Activated CD4-positive, alpha-beta T cell treated with anti-CD3 and anti-CD28 coated beads for 36 hours (primary cell): ENCODE measurements at regions of chr7 and their contacts with region 1.

Region 1: GRCh38 chr7:84085147-84085546 is 109.4 kb downstream of the SEMA3A start:
- DNase-seq: no peak
- ATAC-seq: no peak
- H3K4me3 Mint-ChIP-seq: no peak overlapping the region
- H3K27ac Mint-ChIP-seq: no peak overlapping the region
- H3K4me1 Mint-ChIP-seq: peaks cover 13% of the 10 kb centered on the region
- H3K27me3 Mint-ChIP-seq: no peaks in the 10 kb centered on the region

Region 2: DNA sequence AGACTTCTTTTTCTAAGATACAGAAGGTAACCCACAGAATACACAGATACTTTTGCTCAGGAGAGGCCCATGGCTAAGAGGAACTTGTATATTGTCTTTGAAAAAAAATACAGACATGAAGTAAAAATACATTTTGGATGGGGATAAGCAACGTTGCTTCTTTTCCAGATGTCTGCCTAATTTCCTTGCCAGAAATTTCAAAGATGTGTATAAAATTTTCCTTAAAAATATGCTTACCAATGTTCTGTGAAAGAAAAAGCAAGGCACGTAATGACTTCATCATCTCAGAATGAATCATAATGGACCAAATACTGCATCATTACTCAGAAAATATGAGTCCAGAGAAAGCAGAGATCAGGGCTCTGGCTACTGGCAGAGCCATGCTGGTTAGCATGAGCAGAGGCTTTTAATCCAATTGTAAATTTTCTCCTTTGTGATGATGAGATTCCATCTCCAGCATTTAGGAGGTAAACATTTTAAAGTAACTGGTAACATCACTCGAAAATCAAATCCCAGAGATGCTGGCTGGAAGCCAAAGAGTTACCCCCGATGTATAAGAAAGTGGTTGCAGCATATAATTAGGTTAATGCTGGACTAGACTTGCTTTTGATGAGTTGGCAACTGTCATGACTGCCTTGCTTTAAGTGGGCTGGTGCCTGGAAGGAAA is 163.1 kb before region 1 on chr7:
- CTCF ChIA-PET with region 1: no interaction called
- POLR2A ChIA-PET with region 1: no interaction called
- intact Hi-C with region 1: no loop called
- DNase-seq: no peak
- ATAC-seq: no peak
- H3K4me3 Mint-ChIP-seq: no peak overlapping the region
- H3K27ac Mint-ChIP-seq: no peak overlapping the region
- H3K4me1 Mint-ChIP-seq: no peaks in the 10 kb centered on the region
- H3K27me3 Mint-ChIP-seq: peaks cover 1% of the 10 kb centered on the region

Region 3: GRCh38 chr7:84039432-84039831 is 45.7 kb before region 1 on chr7:
- CTCF ChIA-PET with region 1: no interaction called
- POLR2A ChIA-PET with region 1: no interaction called
- intact Hi-C with region 1: no loop called
- DNase-seq: no peak
- ATAC-seq: no peak
- H3K4me3 Mint-ChIP-seq: no peak overlapping the region
- H3K27ac Mint-ChIP-seq: no peak overlapping the region
- H3K4me1 Mint-ChIP-seq: no peaks in the 10 kb centered on the region
- H3K27me3 Mint-ChIP-seq: no peaks in the 10 kb centered on the region

Region 4: DNA sequence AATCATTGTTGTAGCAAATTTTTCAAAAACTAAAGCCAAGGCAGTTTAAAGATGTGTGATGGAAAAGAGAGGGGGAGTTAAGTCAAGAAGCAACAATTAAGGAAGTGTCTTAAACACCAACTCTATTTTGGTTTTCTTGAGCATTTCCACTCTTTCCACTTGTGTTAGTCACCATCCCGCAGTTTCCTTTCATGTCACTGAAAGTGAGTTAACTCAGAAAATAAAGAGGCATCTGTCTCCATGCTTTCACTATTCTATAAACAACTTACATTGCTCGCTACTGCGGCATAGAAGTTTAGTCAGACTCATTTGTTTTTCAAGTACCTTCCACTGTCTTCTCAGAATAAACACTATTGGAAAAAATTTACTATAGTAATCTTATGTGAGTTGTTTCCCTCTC is 1386.6 kb after region 1 on chr7:
- CTCF ChIA-PET with region 1: no interaction called
- POLR2A ChIA-PET with region 1: no interaction called
- intact Hi-C with region 1: loop called in 1 of 2 experiments (anchors 10 kb)
- DNase-seq: peak; percentile 16
- ATAC-seq: peak; percentile 83
- H3K4me3 Mint-ChIP-seq: no peak overlapping the region
- H3K27ac Mint-ChIP-seq: no peak overlapping the region
- H3K4me1 Mint-ChIP-seq: peaks cover 7% of the 10 kb centered on the region
- H3K27me3 Mint-ChIP-seq: no peaks in the 10 kb centered on the region